ENCODE measurements at regions of chr6 and their contacts with region 1.

Region 1: GRCh38 chr6:52284460-52285176 is at the start of gene MCM3:
- DNase-seq: peak; percentile 98
- ATAC-seq: peak; percentile 97
- H3K4me3 Mint-ChIP-seq: no peak within 1 kb of the TSS
- H3K27ac Mint-ChIP-seq: peak within 1 kb of the TSS; percentile 82
- H3K4me1 Mint-ChIP-seq: peaks cover 47% of the 10 kb centered on the region
- H3K27me3 Mint-ChIP-seq: no peaks in the 10 kb centered on the region
- total RNA-seq, gene MCM3: 276 to 279 TPM

Region 2: DNA sequence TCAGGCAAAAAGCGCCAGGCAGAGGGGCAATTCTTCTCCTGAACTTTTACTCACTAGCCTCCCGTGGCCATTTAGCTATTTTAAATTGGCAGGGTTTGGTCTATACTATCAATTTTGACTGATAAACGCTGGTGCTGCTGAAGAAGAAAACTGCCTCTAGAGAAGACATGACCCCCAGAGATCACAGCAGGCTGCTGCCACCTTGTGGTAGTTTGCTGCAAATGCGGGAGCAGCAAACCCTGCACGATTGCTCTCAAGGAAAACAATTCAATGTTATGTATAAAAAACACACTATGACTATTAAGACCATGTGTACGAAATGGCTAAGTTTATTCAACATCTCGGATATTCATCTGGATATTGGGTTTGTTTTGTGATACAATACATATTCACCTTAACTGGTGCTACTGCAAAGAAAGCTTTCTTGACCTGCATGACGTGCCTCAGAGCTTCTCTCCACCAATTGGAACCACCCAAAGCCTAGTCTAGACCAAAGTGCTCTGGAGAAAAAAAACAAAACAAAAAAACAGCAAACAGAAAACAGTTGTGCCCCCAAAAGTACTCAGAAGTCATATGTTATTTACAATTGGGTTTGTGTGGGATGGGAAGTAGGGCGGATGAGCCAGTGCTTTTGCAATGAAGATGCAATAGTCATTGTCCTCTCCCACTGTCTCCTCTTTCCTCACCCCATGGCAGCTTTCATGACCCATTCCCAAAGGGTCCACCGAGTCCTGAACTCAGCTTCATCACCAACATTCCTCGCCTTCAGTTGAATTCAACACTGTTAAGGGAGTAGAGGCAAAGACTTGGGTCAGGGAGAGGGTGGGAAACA is 20.7 kb before region 1 on chr6:
- CTCF ChIA-PET with region 1: interaction called, 13 read pairs
- POLR2A ChIA-PET with region 1: interaction called, 3 read pairs
- intact Hi-C with region 1: loop called (anchors 2 kb)
- DNase-seq: peak; percentile 84
- ATAC-seq: peak; percentile 84
- H3K4me3 Mint-ChIP-seq: no peak overlapping the region
- H3K27ac Mint-ChIP-seq: peak overlapping the region; percentile 42
- H3K4me1 Mint-ChIP-seq: peaks cover 12% of the 10 kb centered on the region
- H3K27me3 Mint-ChIP-seq: no peaks in the 10 kb centered on the region

Region 3: DNA sequence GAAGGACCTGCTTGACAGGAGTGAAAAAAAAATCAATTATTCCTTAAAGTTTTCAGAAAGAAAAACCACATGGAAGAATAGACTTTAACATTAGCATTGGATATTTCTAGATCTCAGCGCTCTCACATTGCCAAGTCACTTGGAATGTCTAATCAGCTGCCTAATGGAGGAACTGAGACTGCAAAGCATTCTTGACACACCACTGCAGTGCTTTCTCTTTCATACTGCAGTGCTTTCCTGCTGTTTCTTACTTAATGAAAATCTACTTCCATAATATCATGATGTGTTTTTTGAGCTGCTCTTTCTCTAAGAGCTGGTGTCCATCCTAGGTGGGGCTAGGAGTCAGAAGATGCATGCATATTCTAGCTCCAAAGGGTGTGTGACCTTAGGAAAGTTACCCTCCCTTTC is 20.4 kb after region 1 on chr6:
- CTCF ChIA-PET with region 1: interaction called, 34 read pairs
- POLR2A ChIA-PET with region 1: interaction called, 4 read pairs
- intact Hi-C with region 1: loop called in 1 of 2 experiments (anchors 1 kb)
- DNase-seq: no peak
- ATAC-seq: peak; percentile 42
- H3K4me3 Mint-ChIP-seq: peak overlapping the region; percentile 32
- H3K27ac Mint-ChIP-seq: peak overlapping the region; percentile 89
- H3K4me1 Mint-ChIP-seq: peaks cover 72% of the 10 kb centered on the region
- H3K27me3 Mint-ChIP-seq: no peaks in the 10 kb centered on the region

Region 4: DNA sequence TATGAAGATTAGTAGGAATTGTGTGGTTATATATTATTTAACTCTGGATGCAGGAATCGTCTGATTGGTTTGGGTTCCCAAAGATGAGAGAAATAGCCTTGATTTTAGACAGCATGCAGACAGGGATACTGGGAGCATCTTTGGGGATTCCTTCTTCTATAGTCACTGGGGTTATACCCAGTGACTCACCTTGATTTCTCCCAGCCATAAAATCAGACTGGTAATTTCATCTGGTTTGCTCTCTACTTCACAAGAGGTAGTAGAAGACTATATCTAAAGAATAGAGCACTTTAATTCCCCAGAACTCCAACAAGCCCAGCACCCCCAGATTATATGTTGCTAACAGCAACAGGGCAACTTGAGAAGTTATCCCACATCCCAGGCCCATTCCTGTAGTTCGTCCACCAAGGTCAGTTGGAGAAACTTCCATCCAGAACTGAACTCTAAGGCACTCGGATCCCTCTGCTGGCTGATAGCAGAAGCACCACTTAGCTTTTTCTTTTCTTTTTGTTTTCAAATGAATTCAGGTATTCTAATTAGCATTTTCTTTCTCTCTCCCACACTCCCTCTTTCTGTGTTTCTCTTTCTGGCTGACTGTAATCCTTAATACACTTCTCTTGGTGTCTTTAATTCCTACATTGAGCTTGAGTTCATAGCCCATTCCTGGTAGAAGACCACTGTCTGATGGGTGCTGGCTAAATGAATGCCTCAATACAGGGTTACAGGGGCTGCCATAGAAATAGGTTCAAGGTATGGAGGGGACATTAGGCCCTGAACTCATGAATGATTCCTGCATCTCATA is 115.1 kb after region 1 on chr6:
- CTCF ChIA-PET with region 1: interaction called, 153 read pairs
- POLR2A ChIA-PET with region 1: interaction called, 10 read pairs
- intact Hi-C with region 1: loop called (anchors 1 kb)
- DNase-seq: peak; percentile 54
- ATAC-seq: peak; percentile 51
- H3K4me3 Mint-ChIP-seq: no peak overlapping the region
- H3K27ac Mint-ChIP-seq: no peak overlapping the region
- H3K4me1 Mint-ChIP-seq: peaks cover 64% of the 10 kb centered on the region
- H3K27me3 Mint-ChIP-seq: no peaks in the 10 kb centered on the region

Region 5: GRCh38 chr6:52577022-52577777 is 292.6 kb after region 1 on chr6 and contains the start of gene TRAM2:
- CTCF ChIA-PET with region 1: interaction called, 6 read pairs
- POLR2A ChIA-PET with region 1: no interaction called
- intact Hi-C with region 1: loop called in 1 of 2 experiments (anchors 2 kb)
- DNase-seq: peak; percentile 78
- ATAC-seq: peak; percentile 56
- H3K4me3 Mint-ChIP-seq: peak within 1 kb of the TSS; percentile 79
- H3K27ac Mint-ChIP-seq: peak within 1 kb of the TSS; percentile 80
- H3K4me1 Mint-ChIP-seq: peaks cover 43% of the 10 kb centered on the region
- H3K27me3 Mint-ChIP-seq: peaks cover 2% of the 10 kb centered on the region
- total RNA-seq, gene TRAM2: 3.5 to 3.6 TPM

Region 6: DNA sequence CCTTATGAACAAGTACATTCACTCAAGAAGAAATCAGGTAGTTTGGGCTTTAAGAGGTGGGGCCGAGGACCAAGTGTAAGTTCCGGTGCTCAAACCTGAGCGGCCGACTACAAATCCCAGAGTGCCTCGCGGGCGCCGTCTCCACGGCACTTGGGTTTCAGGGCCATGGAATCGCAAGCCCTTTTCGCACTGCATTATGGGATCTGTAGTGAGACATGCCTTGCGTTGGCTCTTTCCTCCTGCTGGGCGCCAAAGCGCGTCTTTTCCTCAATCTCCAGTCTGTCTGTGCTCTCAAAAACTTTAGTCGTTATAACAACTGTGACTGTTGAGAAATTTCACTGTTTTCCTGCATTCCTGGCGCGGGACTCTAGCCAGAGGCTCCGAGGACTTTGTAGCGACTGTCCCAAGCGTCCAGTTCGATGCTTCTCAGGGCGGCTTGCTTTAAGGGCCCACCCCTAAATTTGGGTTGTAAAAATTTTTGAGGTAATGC is 780.2 kb after region 1 on chr6:
- CTCF ChIA-PET with region 1: no interaction called
- POLR2A ChIA-PET with region 1: no interaction called
- intact Hi-C with region 1: loop called (anchors 2 kb)
- DNase-seq: peak; percentile 98
- ATAC-seq: peak; percentile 84
- H3K4me3 Mint-ChIP-seq: peak overlapping the region; percentile 97
- H3K27ac Mint-ChIP-seq: peak overlapping the region; percentile 100
- H3K4me1 Mint-ChIP-seq: peaks cover 55% of the 10 kb centered on the region
- H3K27me3 Mint-ChIP-seq: no peaks in the 10 kb centered on the region

Measured in activated CD4-positive, alpha-beta T cell treated with anti-CD3 and anti-CD28 coated beads for 36 hours (primary cell).